Activated CD8-positive, alpha-beta T cell treated with anti-CD3 and anti-CD28 coated beads for 36 hours (primary cell): ENCODE measurements at regions of chr11 and their contacts with region 1.

Region 1: GRCh38 chr11:72831513-72832300 is 17.5 kb downstream of the ATG16L2 start:
- DNase-seq: peak; percentile 48
- ATAC-seq: peak; percentile 60
- H3K4me3 Mint-ChIP-seq: no peak overlapping the region
- H3K27ac Mint-ChIP-seq: peak overlapping the region; percentile 33
- H3K4me1 Mint-ChIP-seq: peaks cover 14% of the 10 kb centered on the region
- H3K27me3 Mint-ChIP-seq: no peaks in the 10 kb centered on the region
- CTCF ChIP-seq: peak; percentile 55

Region 2: DNA sequence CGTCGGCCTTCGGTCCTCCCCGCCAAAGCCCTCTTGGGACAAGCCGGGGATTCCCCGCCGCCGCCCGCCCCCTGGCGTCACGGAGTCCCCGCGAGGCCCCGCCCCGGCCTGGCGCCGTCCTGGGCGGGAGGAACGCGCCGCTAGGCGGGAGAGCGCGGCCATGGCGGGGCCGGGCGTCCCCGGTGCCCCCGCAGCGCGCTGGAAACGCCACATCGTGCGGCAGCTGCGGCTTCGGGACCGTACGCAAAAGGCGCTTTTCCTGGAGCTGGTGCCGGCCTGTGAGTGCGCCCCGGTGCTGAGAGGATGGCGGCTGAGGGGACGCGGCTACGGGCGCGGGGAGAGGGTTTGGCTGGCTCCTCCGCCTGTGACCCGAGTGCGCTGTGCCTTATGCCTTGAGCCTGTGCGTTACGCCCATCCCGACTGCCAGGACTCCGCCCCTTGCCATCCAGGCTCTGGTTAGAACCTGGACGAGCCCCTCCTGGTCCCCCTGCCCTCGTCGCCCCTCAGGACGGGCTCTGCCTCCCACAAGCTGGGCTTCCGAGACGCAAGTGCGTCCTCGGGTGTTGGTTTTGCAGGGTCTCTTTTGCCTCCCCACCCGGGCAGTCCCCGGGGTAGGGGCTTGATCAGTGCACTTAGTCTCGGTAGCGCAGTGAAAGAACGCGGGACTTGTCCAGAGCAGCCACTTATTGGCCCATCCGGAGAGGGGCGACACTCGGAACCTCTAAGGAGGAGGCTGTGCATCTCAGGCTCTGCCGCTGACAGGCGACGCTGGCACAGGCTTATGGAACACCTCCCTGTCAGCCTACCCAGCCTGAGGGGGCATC is 17.2 kb before region 1 on chr11 and contains the start of gene ATG16L2:
- CTCF ChIA-PET with region 1: interaction called, 9 read pairs
- POLR2A ChIA-PET with region 1: interaction called, 37 read pairs
- intact Hi-C with region 1: no loop called
- DNase-seq: peak; percentile 89
- ATAC-seq: peak; percentile 68
- H3K4me3 Mint-ChIP-seq: peak within 1 kb of the TSS; percentile 97
- H3K27ac Mint-ChIP-seq: peak within 1 kb of the TSS; percentile 98
- H3K4me1 Mint-ChIP-seq: peaks cover 28% of the 10 kb centered on the region
- H3K27me3 Mint-ChIP-seq: no peaks in the 10 kb centered on the region
- CTCF ChIP-seq: peak; percentile 5
- total RNA-seq, gene ATG16L2: 70.8 to 71.4 TPM